ENCODE measurements at regions of chr5 and their contacts with region 1.

Region 1: GRCh38 chr5:31581498-31582099 is 49.5 kb downstream of the C5orf22 start:
- DNase-seq: peak in 4 of 5 donors; percentile 8 to 32 (median 28)
- H3K4me3 ChIP-seq: no peak overlapping the region
- H3K4me3 Mint-ChIP-seq: no peak overlapping the region
- H3K27ac ChIP-seq: no peak overlapping the region
- H3K27ac Mint-ChIP-seq: no peak overlapping the region
- H3K4me1 ChIP-seq: no peaks in the 10 kb centered on the region
- H3K4me1 Mint-ChIP-seq: no peaks in the 10 kb centered on the region
- H3K27me3 ChIP-seq: no peaks in the 10 kb centered on the region
- H3K27me3 Mint-ChIP-seq: peaks cover 5 to 17% of the 10 kb centered on the region in 2 donors

Region 2: DNA sequence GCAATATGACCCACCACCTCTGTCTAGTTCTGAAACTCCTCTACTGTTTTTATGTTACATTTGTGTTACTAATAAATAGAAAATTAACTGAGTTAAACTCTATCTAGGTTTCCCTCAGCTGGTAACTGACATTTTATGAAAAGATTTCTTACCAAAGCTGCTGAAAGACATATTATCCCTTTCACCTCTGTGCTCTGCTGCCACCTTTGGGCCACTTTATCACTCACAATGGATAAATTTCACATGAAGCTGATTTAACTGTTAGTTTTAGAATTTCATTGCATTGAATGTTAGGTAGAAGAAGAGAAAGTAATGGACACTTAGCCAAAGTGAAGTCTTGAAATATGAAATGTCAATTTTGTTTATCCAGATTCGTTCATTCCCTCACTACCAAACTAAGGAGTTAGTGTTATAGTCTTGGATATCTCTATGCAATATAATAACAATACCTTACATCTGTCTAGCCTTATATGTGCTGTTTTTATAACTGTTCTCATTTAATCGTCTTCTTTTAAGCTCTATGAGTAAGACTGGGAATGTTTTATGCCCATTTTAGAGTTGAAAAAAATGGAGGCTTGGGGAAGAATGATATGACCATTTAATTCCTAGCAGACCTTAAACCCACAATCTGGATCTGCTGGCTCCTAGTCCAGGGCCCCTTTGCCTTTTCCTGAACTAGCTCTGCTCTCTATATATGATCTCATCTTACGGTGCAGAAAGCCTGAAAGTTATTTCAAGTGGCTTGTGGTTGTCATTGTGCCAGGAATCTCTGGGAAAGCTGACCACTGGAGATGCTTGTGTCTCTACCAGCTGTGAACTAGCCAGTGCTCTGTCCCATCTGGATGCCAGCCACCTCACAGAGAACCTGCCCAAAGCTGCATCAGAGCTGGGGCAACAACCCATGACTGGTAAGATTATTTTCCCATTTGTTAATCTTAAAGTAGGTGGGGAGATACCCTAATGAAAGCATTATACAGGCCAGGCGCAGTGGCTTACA is 495.4 kb after region 1 on chr5:
- CTCF ChIA-PET with region 1: interaction called, 10 read pairs
- POLR2A ChIA-PET with region 1: no interaction called
- intact Hi-C with region 1: loop called (anchors 1 kb)
- DNase-seq: peak in 4 of 5 donors; percentile 19 to 44 (median 32)
- H3K4me3 ChIP-seq: no peak overlapping the region
- H3K4me3 Mint-ChIP-seq: no peak overlapping the region
- H3K27ac ChIP-seq: no peak overlapping the region
- H3K27ac Mint-ChIP-seq: no peak overlapping the region
- H3K4me1 ChIP-seq: no peaks in the 10 kb centered on the region
- H3K4me1 Mint-ChIP-seq: no peaks in the 10 kb centered on the region
- H3K27me3 ChIP-seq: no peaks in the 10 kb centered on the region
- H3K27me3 Mint-ChIP-seq: peaks cover 0 to 1% of the 10 kb centered on the region in 2 donors

Region 3: GRCh38 chr5:32092938-32093812 is 511.6 kb after region 1 on chr5:
- CTCF ChIA-PET with region 1: interaction called, 11 read pairs
- POLR2A ChIA-PET with region 1: no interaction called
- intact Hi-C with region 1: no loop called
- DNase-seq: peak; percentile 45 to 64 (median 51)
- H3K4me3 ChIP-seq: no peak overlapping the region
- H3K4me3 Mint-ChIP-seq: no peak overlapping the region
- H3K27ac ChIP-seq: no peak overlapping the region
- H3K27ac Mint-ChIP-seq: peak overlapping the region in 1 of 7 donors; percentile 11
- H3K4me1 ChIP-seq: no peaks in the 10 kb centered on the region
- H3K4me1 Mint-ChIP-seq: peaks cover 3 to 6% (median 5%) of the 10 kb centered on the region in 4 donors
- H3K27me3 ChIP-seq: no peaks in the 10 kb centered on the region
- H3K27me3 Mint-ChIP-seq: no peaks in the 10 kb centered on the region

Region 4: GRCh38 chr5:33423018-33423630 is 1841.5 kb after region 1 on chr5:
- CTCF ChIA-PET with region 1: no interaction called
- POLR2A ChIA-PET with region 1: no interaction called
- intact Hi-C with region 1: loop called (anchors 5 kb)
- DNase-seq: no peak
- H3K4me3 ChIP-seq: no peak overlapping the region
- H3K4me3 Mint-ChIP-seq: no peak overlapping the region
- H3K27ac ChIP-seq: no peak overlapping the region
- H3K27ac Mint-ChIP-seq: no peak overlapping the region
- H3K4me1 ChIP-seq: no peaks in the 10 kb centered on the region
- H3K4me1 Mint-ChIP-seq: no peaks in the 10 kb centered on the region
- H3K27me3 ChIP-seq: no peaks in the 10 kb centered on the region
- H3K27me3 Mint-ChIP-seq: peaks cover 10 to 11% of the 10 kb centered on the region in 2 donors